Heart right ventricle (tissue), 16 donors: ENCODE measurements at regions of chr7 and their contacts with region 1.

Region 1: DNA sequence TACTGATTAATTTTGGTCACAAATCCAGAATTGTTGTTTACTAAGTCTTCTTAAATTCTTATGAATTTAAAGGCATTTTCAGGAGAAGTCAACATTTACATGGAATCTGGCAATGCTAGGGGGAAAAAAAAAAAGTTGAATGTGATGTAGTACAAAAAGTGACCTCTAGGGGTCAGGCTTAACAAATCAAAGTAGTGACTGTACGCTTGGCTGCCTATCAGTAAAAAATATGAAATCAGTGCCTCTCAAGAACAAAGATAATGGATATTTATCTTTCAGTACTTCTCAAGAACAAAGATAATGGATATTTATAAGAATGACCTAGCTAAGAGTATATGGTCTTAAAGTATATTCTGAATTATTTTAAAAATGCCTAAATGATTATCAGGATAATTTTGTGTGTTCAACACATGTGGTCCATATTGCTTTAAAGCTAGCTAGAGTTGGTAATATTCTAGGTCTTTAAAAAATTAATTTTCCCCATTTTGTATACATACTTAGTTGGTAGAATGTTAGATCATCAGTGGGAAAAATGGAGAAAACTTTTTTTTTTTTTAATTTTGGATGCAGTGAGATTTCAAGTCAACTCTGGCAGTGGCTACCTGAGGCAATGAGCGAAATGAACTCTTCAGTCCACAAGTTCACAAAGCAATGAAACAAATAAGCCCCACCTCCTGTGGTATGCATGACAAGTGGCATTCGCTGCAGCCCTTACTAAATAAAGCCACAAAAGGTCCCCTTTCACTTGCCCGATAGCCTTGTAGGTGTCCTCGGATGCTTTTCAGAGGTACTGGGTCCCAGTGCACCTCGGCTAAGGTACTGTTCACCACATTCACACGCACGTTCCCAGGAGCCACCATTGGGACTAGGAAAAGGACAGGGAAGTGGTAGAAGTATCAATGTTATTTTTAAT is 51.2 kb upstream of the LAMB4 start:
- DNase-seq: no peak
- ATAC-seq: peak in 3 of 8 donors; percentile 20 to 53 (median 33)
- H3K4me3 ChIP-seq: no peak overlapping the region
- H3K27ac ChIP-seq: no peak overlapping the region
- H3K4me1 ChIP-seq: no peaks in the 10 kb centered on the region
- H3K27me3 ChIP-seq: no peaks in the 10 kb centered on the region
- CTCF ChIP-seq: peak; percentile 59 to 84 (median 79)

Region 2: GRCh38 chr7:108235451-108236061 is 54.2 kb after region 1 on chr7:
- intact Hi-C with region 1: no loop called
- DNase-seq: no peak
- ATAC-seq: no peak
- H3K4me3 ChIP-seq: no peak overlapping the region
- H3K27ac ChIP-seq: no peak overlapping the region
- H3K4me1 ChIP-seq: peaks cover 0 to 3% (median 0%) of the 10 kb centered on the region in 9 donors
- H3K27me3 ChIP-seq: no peaks in the 10 kb centered on the region
- CTCF ChIP-seq: no peak

Region 3: GRCh38 chr7:108459931-108460551 is 278.7 kb after region 1 on chr7:
- intact Hi-C with region 1: loop called in 9 of 10 experiments (anchors 2 to 10 kb)
- DNase-seq: no peak
- ATAC-seq: no peak
- H3K4me3 ChIP-seq: no peak overlapping the region
- H3K27ac ChIP-seq: no peak overlapping the region
- H3K4me1 ChIP-seq: peaks cover 2 to 19% (median 11%) of the 10 kb centered on the region in 9 donors
- H3K27me3 ChIP-seq: peaks cover 6 to 61% (median 40%) of the 10 kb centered on the region in 7 donors
- CTCF ChIP-seq: peak in 7 of 9 donors; percentile 17 to 51 (median 42)

Region 4: GRCh38 chr7:108497082-108497725 is 315.9 kb after region 1 on chr7:
- intact Hi-C with region 1: loop called (anchors 2 to 10 kb)
- DNase-seq: peak in 1 of 2 donors; percentile 23
- ATAC-seq: peak in 2 of 8 donors; percentile 33 to 41
- H3K4me3 ChIP-seq: no peak overlapping the region
- H3K27ac ChIP-seq: no peak overlapping the region
- H3K4me1 ChIP-seq: no peaks in the 10 kb centered on the region
- H3K27me3 ChIP-seq: no peaks in the 10 kb centered on the region
- CTCF ChIP-seq: peak; percentile 66 to 89 (median 85)

Region 5: DNA sequence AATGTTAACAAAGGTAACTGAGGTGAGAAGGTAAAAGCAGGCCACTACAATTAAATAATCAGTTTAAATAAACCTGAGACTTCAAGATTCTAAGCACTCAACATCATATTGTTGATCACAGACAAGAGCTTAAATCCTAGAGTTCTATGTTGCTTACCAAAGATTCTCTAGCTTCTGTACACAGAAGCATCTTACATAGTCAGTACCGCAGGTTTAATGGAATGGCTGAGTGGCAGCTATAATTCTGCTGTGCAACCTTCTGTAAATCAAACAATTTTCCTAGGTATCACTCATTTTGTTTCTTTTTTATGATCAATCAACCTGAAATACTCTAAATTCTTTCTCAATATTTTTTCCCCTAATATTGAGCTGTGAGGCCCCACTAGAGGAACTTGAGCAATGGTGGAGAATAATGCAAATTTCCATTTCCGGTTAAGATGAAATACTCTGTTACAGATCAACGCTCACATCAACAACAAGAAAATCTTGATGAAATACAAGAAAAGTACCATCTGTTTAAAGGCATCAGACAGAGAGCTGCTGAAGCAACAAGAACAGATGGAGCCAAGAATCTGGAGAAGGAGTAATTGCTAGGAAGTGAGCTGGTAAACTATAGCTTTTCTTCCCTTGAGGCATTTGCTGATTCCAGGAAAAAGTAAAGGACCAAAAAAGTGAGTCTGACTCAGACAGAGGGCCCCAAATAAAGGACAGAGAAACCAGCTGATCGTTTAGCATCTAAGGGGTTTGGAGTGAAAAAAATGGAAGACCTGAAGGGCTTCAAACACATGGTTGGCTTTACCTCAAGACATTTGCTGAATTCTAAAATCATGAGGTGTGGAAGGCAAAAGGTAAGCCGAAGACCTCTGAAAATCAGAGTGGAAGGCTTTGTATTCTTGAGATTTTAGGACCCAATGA is 322.0 kb after region 1 on chr7:
- intact Hi-C with region 1: loop called in 6 of 10 experiments (anchors 5 to 10 kb)
- DNase-seq: no peak
- ATAC-seq: peak in 1 of 8 donors; percentile 57
- H3K4me3 ChIP-seq: no peak overlapping the region
- H3K27ac ChIP-seq: peak overlapping the region in 1 of 10 donors; percentile 71
- H3K4me1 ChIP-seq: peaks cover 0 to 13% (median 0%) of the 10 kb centered on the region in 9 donors
- H3K27me3 ChIP-seq: no peaks in the 10 kb centered on the region
- CTCF ChIP-seq: no peak

Region 6: DNA sequence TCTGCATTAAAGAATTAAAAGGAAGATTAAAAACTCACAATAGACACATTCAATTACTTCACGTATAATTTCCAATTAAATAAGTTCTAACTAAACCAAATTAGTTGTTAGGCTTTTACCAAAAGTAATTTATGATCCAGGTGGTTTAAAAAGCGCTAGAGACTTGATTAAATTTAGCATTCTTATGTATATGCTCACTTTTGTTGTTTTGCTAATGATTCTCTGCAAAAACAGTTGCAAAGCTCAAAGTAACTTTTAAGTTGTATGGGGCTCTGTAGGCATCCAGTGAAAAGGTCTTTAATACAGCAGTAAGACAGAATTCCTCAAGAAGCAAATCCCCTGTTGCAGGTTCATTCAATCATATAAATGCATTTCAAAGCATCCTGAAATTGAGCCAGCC is 360.1 kb after region 1 on chr7:
- intact Hi-C with region 1: no loop called
- DNase-seq: no peak
- ATAC-seq: no peak
- H3K4me3 ChIP-seq: no peak overlapping the region
- H3K27ac ChIP-seq: no peak overlapping the region
- H3K4me1 ChIP-seq: no peaks in the 10 kb centered on the region
- H3K27me3 ChIP-seq: no peaks in the 10 kb centered on the region
- CTCF ChIP-seq: no peak